Naive thymus-derived CD4-positive, alpha-beta T cell (primary cell): ENCODE measurements at regions of chr6 and their contacts with region 1.

Region 1: DNA sequence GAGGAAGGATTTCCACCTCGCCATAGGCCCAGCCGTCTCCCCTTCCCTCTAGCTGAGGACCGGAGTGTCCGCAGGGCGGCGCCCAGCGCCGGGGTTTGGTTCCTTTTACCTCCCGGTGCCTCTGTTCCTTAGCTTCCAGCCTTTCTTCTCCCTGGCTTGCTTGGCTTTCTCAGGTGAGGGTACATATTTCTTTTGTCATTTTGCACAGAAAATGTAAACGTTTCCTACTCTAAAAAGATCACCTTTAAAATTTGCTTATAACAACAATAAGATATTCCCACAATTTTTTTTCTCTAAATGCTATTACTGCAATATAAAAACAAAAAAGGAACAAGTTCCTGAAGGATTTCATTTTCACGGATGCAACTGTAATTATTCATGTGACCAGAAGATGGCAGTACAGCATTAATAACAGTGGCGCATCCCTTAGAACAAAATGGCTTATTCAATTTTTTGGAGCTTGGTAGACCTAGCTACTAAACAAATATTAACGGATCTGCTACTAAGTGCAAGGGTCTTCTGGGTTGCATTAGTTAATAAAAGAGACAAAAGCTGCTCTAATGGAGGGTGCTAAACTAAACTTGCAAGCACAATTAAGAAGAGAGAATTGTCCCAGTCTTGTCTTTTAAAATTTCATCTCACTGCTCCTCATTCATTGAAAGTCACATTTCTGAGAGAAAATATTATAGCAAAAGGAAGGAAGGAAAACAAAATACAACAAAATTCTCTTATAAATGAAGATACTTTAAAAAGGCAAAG is 172.9 kb downstream of the ADGRG6 start:
- DNase-seq: peak in 7 of 9 donors; percentile 13 to 57 (median 48)
- ATAC-seq: peak; percentile 67
- H3K4me3 ChIP-seq: no peak overlapping the region
- H3K4me3 Mint-ChIP-seq: no peak overlapping the region
- H3K27ac ChIP-seq: no peak overlapping the region
- H3K27ac Mint-ChIP-seq: peak overlapping the region in 3 of 9 donors; percentile 10 to 48 (median 24)
- H3K4me1 ChIP-seq: no peaks in the 10 kb centered on the region
- H3K4me1 Mint-ChIP-seq: peaks cover 0 to 12% (median 6%) of the 10 kb centered on the region in 7 donors
- H3K27me3 ChIP-seq: no peaks in the 10 kb centered on the region
- H3K27me3 Mint-ChIP-seq: peaks cover 0 to 5% (median 0%) of the 10 kb centered on the region in 5 donors

Region 2: GRCh38 chr6:142236691-142237090 is 238.0 kb before region 1 on chr6:
- CTCF ChIA-PET with region 1: no interaction called
- POLR2A ChIA-PET with region 1: no interaction called
- intact Hi-C with region 1: loop called in 1 of 2 experiments (anchors 5 kb)
- DNase-seq: no peak
- ATAC-seq: no peak
- H3K4me3 ChIP-seq: no peak overlapping the region
- H3K4me3 Mint-ChIP-seq: no peak overlapping the region
- H3K27ac ChIP-seq: no peak overlapping the region
- H3K27ac Mint-ChIP-seq: no peak overlapping the region
- H3K4me1 ChIP-seq: no peaks in the 10 kb centered on the region
- H3K4me1 Mint-ChIP-seq: peaks cover 0 to 19% (median 15%) of the 10 kb centered on the region in 7 donors
- H3K27me3 ChIP-seq: no peaks in the 10 kb centered on the region
- H3K27me3 Mint-ChIP-seq: peaks cover 0 to 5% (median 0%) of the 10 kb centered on the region in 5 donors

Region 3: GRCh38 chr6:142692942-142693341 is 218.2 kb after region 1 on chr6:
- CTCF ChIA-PET with region 1: interaction called, 12 read pairs
- POLR2A ChIA-PET with region 1: interaction called, 3 read pairs
- intact Hi-C with region 1: loop called (anchors 1 kb)
- DNase-seq: peak; percentile 39 to 73 (median 57)
- ATAC-seq: peak; percentile 89
- H3K4me3 ChIP-seq: no peak overlapping the region
- H3K4me3 Mint-ChIP-seq: peak overlapping the region in 3 of 10 donors; percentile 0 to 27 (median 16)
- H3K27ac ChIP-seq: no peak overlapping the region
- H3K27ac Mint-ChIP-seq: peak overlapping the region in 7 of 9 donors; percentile 5 to 59 (median 40)
- H3K4me1 ChIP-seq: peaks cover 0 to 7% of the 10 kb centered on the region in 2 donors
- H3K4me1 Mint-ChIP-seq: peaks cover 9 to 31% (median 22%) of the 10 kb centered on the region in 7 donors
- H3K27me3 ChIP-seq: no peaks in the 10 kb centered on the region
- H3K27me3 Mint-ChIP-seq: peaks cover 0 to 2% (median 0%) of the 10 kb centered on the region in 5 donors

Region 4: GRCh38 chr6:142952614-142953013 is 477.9 kb after region 1 on chr6:
- CTCF ChIA-PET with region 1: interaction called, 4 read pairs
- POLR2A ChIA-PET with region 1: no interaction called
- intact Hi-C with region 1: loop called in 1 of 2 experiments (anchors 1 kb)
- DNase-seq: no peak
- ATAC-seq: peak; percentile 26
- H3K4me3 ChIP-seq: no peak overlapping the region
- H3K4me3 Mint-ChIP-seq: no peak overlapping the region
- H3K27ac ChIP-seq: peak overlapping the region; percentile 23
- H3K27ac Mint-ChIP-seq: peak overlapping the region in 8 of 9 donors; percentile 17 to 94 (median 76)
- H3K4me1 ChIP-seq: no peaks in the 10 kb centered on the region
- H3K4me1 Mint-ChIP-seq: peaks cover 15 to 46% (median 29%) of the 10 kb centered on the region in 7 donors
- H3K27me3 ChIP-seq: no peaks in the 10 kb centered on the region
- H3K27me3 Mint-ChIP-seq: peaks cover 0 to 4% (median 0%) of the 10 kb centered on the region in 5 donors

Region 5: GRCh38 chr6:143337201-143337949 is 862.7 kb after region 1 on chr6:
- CTCF ChIA-PET with region 1: interaction called, 5 read pairs
- POLR2A ChIA-PET with region 1: no interaction called
- intact Hi-C with region 1: loop called (anchors 1 kb)
- DNase-seq: peak; percentile 4 to 56 (median 12)
- ATAC-seq: no peak
- H3K4me3 ChIP-seq: no peak overlapping the region
- H3K4me3 Mint-ChIP-seq: no peak overlapping the region
- H3K27ac ChIP-seq: no peak overlapping the region
- H3K27ac Mint-ChIP-seq: no peak overlapping the region
- H3K4me1 ChIP-seq: no peaks in the 10 kb centered on the region
- H3K4me1 Mint-ChIP-seq: peaks cover 0 to 2% (median 0%) of the 10 kb centered on the region in 7 donors
- H3K27me3 ChIP-seq: no peaks in the 10 kb centered on the region
- H3K27me3 Mint-ChIP-seq: no peaks in the 10 kb centered on the region

Region 6: DNA sequence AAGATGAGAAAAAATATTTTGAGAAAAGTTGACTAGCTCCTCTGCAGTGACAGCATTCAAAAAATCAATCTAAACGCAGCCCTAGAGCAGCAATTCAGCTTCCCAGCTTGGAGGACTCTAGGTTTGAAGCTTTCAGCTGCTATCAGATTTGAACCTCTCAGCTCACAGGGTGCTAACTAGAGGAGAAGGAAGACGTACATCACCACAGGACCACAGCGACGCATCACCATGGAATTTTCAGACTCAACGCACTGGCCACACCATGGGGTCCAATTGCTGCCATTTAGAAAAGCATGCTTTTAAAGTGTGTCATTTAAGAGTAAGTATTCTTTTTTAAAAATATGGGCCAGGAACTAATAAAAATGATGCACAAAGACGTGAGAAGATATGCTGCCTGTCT is 1081.8 kb after region 1 on chr6:
- CTCF ChIA-PET with region 1: no interaction called
- POLR2A ChIA-PET with region 1: no interaction called
- intact Hi-C with region 1: loop called in 1 of 2 experiments (anchors 10 kb)
- DNase-seq: no peak
- ATAC-seq: no peak
- H3K4me3 ChIP-seq: no peak overlapping the region
- H3K4me3 Mint-ChIP-seq: peak overlapping the region in 2 of 10 donors; percentile 27 to 76
- H3K27ac ChIP-seq: no peak overlapping the region
- H3K27ac Mint-ChIP-seq: peak overlapping the region in 2 of 9 donors; percentile 27 to 90
- H3K4me1 ChIP-seq: peaks cover 20 to 62% of the 10 kb centered on the region in 2 donors
- H3K4me1 Mint-ChIP-seq: peaks cover 33 to 62% (median 50%) of the 10 kb centered on the region in 7 donors
- H3K27me3 ChIP-seq: no peaks in the 10 kb centered on the region
- H3K27me3 Mint-ChIP-seq: no peaks in the 10 kb centered on the region